ENCODE measurements at regions of chr1 and their contacts with region 1.

Region 1: DNA sequence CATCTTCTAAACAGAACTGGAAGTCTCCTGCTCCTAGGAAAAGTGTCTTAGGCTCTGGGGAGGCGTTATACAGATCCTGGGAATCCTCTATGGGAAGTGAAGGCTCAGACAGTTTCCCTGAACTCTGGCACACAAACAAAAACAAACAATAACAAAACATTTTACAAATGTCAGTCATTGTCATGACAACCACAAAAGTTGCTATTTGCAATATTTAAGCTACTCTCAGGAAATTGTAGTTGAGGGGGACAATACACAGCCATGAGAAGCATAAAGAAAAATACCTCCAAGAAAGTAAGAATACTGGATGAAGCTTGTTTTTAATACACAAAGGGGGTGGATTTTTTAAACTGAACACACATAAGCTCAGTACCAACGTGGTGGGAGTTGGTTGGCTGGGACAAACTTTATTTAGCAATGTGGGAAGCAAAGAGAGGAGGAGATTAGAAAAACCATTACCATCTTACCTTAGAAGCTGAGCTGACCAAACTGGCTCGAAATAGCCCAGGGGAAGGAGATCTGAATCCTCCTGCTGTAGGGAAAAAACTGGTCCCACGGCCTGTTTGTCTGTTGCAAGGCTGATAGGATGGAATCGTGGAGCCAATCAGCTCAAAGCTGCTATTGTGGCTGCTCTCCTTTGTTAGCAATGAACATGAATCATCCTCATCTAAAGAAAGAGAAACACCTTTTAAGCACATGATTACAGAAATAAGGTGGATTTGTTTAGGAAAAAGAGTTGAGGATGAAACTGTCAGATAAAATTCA is 21.7 kb downstream of the CLSPN start:
- DNase-seq: no peak
- ATAC-seq: no peak
- H3K4me3 ChIP-seq: no peak overlapping the region
- H3K4me3 Mint-ChIP-seq: no peak overlapping the region
- H3K27ac ChIP-seq: no peak overlapping the region
- H3K27ac Mint-ChIP-seq: no peak overlapping the region
- H3K4me1 ChIP-seq: no peaks in the 10 kb centered on the region
- H3K4me1 Mint-ChIP-seq: no peaks in the 10 kb centered on the region
- H3K27me3 ChIP-seq: no peaks in the 10 kb centered on the region
- H3K27me3 Mint-ChIP-seq: no peaks in the 10 kb centered on the region

Region 2: DNA sequence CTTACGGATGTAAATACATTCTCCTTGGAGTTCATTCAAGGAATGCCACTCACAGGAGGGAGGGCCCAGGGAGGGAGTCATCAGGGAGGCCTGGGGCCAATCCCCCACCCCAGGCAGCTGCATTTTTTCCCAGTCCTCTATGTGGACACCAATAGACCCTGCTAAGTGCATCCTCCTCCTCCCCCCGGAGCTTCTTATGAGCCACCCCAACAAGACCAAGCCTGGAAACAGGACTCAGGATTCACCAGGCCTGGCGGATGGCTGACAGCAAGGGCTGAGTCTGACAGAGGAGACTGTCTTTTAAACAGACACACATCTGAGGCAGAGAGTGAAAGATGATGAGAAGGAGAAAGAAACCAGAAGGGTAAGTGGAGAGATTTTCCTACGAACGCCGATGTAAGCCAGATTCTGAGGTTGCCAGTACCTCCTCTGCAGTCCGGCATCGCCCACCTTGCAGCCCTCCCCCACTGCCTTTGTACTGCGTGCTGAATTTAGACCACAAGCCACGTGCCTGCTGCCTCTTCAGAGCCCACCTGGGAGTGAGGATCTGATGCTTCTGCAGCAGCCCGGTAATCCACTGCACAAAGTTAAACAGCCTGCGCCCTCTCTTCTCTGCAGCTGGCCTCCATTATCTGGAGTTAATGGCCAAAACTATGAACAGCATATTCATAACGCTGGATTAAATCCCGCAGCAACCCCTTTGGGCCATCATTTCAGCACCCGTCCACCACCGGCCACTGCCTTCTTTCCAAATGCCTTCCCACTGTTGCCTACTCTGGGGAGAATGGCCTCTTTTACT is 537.6 kb before region 1 on chr1:
- CTCF ChIA-PET with region 1: no interaction called
- POLR2A ChIA-PET with region 1: interaction called in 1 of 2 experiments, 11 read pairs
- DNase-seq: no peak
- ATAC-seq: no peak
- H3K4me3 ChIP-seq: no peak overlapping the region
- H3K4me3 Mint-ChIP-seq: no peak overlapping the region
- H3K27ac ChIP-seq: no peak overlapping the region
- H3K27ac Mint-ChIP-seq: no peak overlapping the region
- H3K4me1 ChIP-seq: no peaks in the 10 kb centered on the region
- H3K4me1 Mint-ChIP-seq: peaks cover 0 to 4% (median 0%) of the 10 kb centered on the region in 3 donors
- H3K27me3 ChIP-seq: peaks cover 0 to 1% of the 10 kb centered on the region in 2 experiments
- H3K27me3 Mint-ChIP-seq: no peaks in the 10 kb centered on the region

Region 3: GRCh38 chr1:35769188-35769758 is 21.2 kb after region 1 on chr1:
- CTCF ChIA-PET with region 1: interaction called in 1 of 2 experiments, 5 read pairs
- POLR2A ChIA-PET with region 1: interaction called in 1 of 2 experiments, 10 read pairs
- DNase-seq: peak; percentile 53 to 88 (median 74)
- ATAC-seq: peak; percentile 82 to 91 (median 90)
- H3K4me3 ChIP-seq: peak overlapping the region; percentile 86 to 89
- H3K4me3 Mint-ChIP-seq: peak overlapping the region; percentile 81 to 91 (median 88)
- H3K27ac ChIP-seq: peak overlapping the region; percentile 74
- H3K27ac Mint-ChIP-seq: peak overlapping the region; percentile 52 to 64
- H3K4me1 ChIP-seq: peaks cover 2 to 14% of the 10 kb centered on the region in 2 experiments
- H3K4me1 Mint-ChIP-seq: peaks cover 0 to 13% (median 6%) of the 10 kb centered on the region in 3 donors
- H3K27me3 ChIP-seq: no peaks in the 10 kb centered on the region
- H3K27me3 Mint-ChIP-seq: no peaks in the 10 kb centered on the region